Activated naive CD4-positive, alpha-beta T cell treated with anti-CD3 and anti-CD28 coated beads, Interleukin-2, amount 10 ng/mL, durations not matched to agents 7 days and 5 days (primary cell): ENCODE measurements at regions of chr1 and their contacts with region 1.

Region 1: GRCh38 chr1:116020668-116021275 is 44.5 kb downstream of the SLC22A15 start:
- DNase-seq: peak; percentile 70
- H3K4me3 Mint-ChIP-seq: no peak overlapping the region
- H3K27ac Mint-ChIP-seq: no peak overlapping the region
- H3K4me1 Mint-ChIP-seq: no peaks in the 10 kb centered on the region
- H3K27me3 Mint-ChIP-seq: peaks cover 8% of the 10 kb centered on the region

Region 2: GRCh38 chr1:115807723-115808122 is 213.0 kb before region 1 on chr1:
- CTCF ChIA-PET with region 1: interaction called, 12 read pairs
- DNase-seq: peak; percentile 64
- H3K4me3 Mint-ChIP-seq: no peak overlapping the region
- H3K27ac Mint-ChIP-seq: no peak overlapping the region
- H3K4me1 Mint-ChIP-seq: no peaks in the 10 kb centered on the region
- H3K27me3 Mint-ChIP-seq: peaks cover 14% of the 10 kb centered on the region

Region 3: DNA sequence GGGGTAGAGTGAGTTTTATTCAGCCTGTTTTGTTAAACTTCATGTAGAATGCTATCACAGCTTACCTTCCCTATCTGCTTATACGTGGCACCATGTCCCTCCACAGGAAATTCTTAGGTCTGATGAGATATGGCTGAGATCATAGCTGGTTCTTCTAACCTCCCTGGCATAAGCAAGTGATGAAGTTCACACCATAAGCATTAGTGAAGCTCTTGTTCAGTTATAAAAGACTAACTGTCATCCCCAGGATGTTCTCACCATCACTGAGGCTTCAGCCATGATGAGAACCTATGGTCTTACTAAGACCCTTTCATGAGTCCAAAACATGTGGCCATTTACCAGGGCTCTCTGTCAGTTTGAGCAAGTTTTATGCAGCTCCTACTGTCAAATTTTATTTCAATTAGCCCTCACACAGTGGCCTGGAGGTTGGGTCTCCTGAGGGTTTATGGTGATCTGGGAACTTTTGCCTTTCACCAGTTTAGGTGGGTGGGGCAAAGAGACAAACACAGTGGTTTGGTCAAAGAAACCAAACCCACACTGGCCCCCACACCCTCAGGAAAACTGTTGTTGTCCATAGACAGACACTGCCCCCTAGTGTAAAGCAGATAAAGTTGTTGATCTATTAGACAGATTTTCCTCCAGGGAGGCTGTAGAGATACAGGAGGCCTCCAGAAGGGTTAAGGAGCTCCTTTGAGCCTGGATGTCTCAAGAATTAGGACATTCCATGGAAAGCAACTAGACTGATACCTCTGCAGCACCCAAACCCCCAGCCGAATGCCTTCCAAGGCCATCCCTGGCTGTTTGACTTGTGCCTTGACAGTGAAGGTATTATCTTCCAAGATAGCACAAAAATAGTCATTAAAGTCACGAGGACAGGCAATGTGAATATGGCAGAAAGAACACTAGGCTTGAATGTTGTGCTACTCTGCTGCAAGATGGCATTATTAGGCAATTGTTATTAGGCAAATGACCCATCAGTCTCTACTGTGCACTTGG is 39.5 kb before region 1 on chr1:
- CTCF ChIA-PET with region 1: interaction called, 15 read pairs
- DNase-seq: peak; percentile 30
- H3K4me3 Mint-ChIP-seq: no peak overlapping the region
- H3K27ac Mint-ChIP-seq: no peak overlapping the region
- H3K4me1 Mint-ChIP-seq: peaks cover 6% of the 10 kb centered on the region
- H3K27me3 Mint-ChIP-seq: peaks cover 38% of the 10 kb centered on the region

Region 4: GRCh38 chr1:116008651-116009390 is 12.0 kb before region 1 on chr1:
- CTCF ChIA-PET with region 1: interaction called, 15 read pairs
- DNase-seq: no peak
- H3K4me3 Mint-ChIP-seq: no peak overlapping the region
- H3K27ac Mint-ChIP-seq: no peak overlapping the region
- H3K4me1 Mint-ChIP-seq: peaks cover 20% of the 10 kb centered on the region
- H3K27me3 Mint-ChIP-seq: peaks cover 2% of the 10 kb centered on the region

Region 5: DNA sequence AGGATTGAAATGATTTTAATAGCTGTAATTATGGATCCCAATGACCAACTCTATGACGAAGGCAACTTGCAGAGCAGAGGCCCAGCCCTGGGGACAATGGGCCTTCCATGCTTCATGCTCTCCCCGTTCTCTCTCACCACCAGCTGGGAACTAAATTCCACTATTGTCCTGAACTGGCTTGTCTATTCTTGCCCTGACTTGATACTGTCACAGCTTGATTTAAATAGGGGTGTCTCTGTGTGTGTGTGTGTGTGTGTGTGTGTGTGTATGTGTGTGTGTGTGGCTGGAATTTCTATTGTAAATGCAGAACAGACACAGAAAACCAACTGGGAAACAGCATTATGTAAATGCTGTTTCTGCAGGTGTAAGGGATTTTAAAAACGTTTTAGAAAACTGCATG is 12.6 kb after region 1 on chr1:
- CTCF ChIA-PET with region 1: interaction called, 11 read pairs
- DNase-seq: no peak
- H3K4me3 Mint-ChIP-seq: no peak overlapping the region
- H3K27ac Mint-ChIP-seq: no peak overlapping the region
- H3K4me1 Mint-ChIP-seq: no peaks in the 10 kb centered on the region
- H3K27me3 Mint-ChIP-seq: peaks cover 4% of the 10 kb centered on the region

Region 6: GRCh38 chr1:116131866-116132605 is 111.3 kb after region 1 on chr1:
- CTCF ChIA-PET with region 1: no interaction called
- DNase-seq: no peak
- H3K4me3 Mint-ChIP-seq: no peak overlapping the region
- H3K27ac Mint-ChIP-seq: no peak overlapping the region
- H3K4me1 Mint-ChIP-seq: peaks cover 19% of the 10 kb centered on the region
- H3K27me3 Mint-ChIP-seq: peaks cover 21% of the 10 kb centered on the region